Heart right ventricle (tissue), 16 donors: ENCODE measurements at regions of chr12 and their contacts with region 1.

Region 1: DNA sequence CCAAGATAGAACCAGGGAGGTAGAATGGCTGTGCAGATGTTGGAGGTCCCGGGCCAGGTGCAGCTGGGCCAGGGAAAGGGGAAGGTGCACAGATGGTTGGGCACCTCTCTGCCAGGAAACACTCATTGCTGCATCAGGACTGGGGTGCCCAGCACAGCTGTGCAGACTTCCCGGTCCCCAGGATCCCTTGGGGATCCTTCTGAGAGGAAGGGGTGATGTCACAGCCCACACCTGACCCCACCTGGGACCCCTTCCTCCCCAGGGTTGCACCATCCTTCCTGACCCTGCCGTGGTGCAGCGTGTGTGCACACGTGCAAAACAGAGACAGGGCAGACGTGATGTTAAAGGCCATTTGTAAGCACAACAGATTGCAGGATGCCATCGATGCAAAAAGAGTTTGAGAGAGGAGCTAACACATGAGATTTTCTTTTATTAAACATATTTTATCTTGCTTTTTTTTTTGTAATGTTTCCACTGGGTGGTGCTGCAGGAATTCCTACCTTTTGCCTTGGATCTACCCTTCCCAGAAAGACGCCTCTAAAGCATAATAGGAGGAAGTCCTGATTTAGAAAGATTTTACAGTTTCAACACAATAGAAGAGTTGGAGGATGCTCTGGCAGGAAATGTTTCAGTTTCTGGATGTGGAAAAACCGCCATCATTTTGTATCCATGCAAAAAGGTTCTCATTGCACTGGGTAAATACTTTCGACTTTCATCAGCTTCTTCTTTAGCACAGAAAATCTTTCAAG is 14.8 kb downstream of the ELK3 start:
- DNase-seq: no peak
- ATAC-seq: peak; percentile 63 to 82 (median 75)
- H3K4me3 ChIP-seq: peak overlapping the region in 4 of 10 donors; percentile 8 to 21 (median 14)
- H3K27ac ChIP-seq: peak overlapping the region in 9 of 10 donors; percentile 53 to 82 (median 76)
- H3K4me1 ChIP-seq: peaks cover 0 to 100% (median 90%) of the 10 kb centered on the region in 9 donors
- H3K27me3 ChIP-seq: no peaks in the 10 kb centered on the region
- CTCF ChIP-seq: peak in 6 of 9 donors; percentile 8 to 51 (median 34)

Region 2: DNA sequence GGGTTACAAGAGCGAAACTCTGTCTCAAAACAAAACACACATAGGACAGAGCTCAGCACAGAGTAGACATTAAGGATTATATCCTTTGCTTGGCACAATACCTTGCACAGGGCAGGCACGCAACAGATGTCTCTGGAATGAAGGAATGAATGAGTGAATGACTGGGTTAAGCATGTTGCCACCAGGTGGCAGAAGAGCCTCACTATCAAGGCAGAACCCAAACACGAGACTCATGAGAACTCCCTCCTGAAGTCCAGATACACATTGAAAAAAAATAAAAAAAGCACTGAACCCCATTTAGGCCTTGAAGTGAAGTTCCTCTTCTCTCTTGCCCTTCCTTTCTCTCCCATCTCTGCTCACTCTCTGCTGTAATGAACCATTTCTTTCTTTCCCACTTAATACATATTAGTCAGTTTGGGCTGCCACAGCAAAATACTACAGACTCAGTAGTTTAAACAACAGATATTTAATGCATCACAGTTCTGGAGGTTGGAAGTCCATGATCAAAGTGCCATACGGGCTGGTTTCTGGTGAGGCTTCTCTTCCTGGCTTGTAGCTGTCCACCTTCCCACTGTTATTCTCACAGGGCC is 147.0 kb before region 1 on chr12:
- intact Hi-C with region 1: loop called in 7 of 10 experiments (anchors 1 to 5 kb)
- DNase-seq: peak; percentile 37 to 80
- ATAC-seq: peak; percentile 75 to 89 (median 84)
- H3K4me3 ChIP-seq: no peak overlapping the region
- H3K27ac ChIP-seq: peak overlapping the region in 1 of 10 donors; percentile 36
- H3K4me1 ChIP-seq: peaks cover 0 to 32% (median 17%) of the 10 kb centered on the region in 9 donors
- H3K27me3 ChIP-seq: no peaks in the 10 kb centered on the region
- CTCF ChIP-seq: peak; percentile 79 to 91 (median 87)

Region 3: DNA sequence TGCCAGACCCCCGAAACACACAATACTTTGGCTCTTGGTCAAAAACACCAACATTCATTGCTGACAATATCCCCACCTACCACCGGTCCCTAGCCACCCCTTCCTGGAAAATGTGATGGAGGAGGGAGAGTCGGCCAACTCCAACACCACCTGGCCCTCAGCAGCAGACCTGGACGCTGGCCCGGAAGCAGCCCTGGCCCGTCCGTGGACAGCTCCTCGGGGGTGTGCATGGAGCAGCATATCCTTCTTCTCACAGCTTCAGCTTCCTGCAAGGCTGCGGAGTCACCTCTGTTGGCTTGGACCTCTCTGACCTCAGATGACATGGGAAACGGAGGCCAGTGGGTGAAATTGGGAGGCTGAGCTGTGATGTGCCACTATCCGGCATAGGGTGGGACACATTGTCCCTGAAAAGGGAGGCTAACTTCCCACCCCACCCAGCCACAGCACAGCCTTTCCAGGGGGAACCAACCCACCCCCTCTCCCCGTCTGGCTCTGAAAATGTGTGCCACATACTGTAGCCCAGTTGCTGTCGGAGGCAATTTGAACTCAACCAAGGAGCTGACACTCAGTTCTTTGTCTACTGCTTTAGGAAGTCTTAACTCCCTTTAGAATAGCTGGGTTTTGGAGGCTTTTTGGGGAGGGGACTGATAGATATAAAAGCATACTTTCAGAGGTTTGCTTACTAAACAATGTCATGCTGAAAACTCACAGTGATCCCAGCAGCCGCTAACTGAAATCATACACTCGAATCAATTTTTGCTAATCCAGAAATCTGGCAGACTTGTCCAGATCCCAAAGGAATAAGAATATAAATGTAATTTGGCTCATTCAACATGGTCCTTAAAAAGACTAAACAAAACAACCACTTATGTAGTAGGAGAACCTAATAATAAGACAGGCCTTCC is 130.5 kb before region 1 on chr12:
- intact Hi-C with region 1: loop called in 1 of 10 experiments (anchors 5 kb)
- DNase-seq: peak; percentile 70 to 82
- ATAC-seq: peak; percentile 88 to 96 (median 92)
- H3K4me3 ChIP-seq: peak overlapping the region in 1 of 10 donors; percentile 16
- H3K27ac ChIP-seq: peak overlapping the region; percentile 31 to 81 (median 58)
- H3K4me1 ChIP-seq: peaks cover 3 to 49% (median 26%) of the 10 kb centered on the region in 9 donors
- H3K27me3 ChIP-seq: peaks cover 0 to 8% (median 0%) of the 10 kb centered on the region in 7 donors
- CTCF ChIP-seq: no peak

Region 4: DNA sequence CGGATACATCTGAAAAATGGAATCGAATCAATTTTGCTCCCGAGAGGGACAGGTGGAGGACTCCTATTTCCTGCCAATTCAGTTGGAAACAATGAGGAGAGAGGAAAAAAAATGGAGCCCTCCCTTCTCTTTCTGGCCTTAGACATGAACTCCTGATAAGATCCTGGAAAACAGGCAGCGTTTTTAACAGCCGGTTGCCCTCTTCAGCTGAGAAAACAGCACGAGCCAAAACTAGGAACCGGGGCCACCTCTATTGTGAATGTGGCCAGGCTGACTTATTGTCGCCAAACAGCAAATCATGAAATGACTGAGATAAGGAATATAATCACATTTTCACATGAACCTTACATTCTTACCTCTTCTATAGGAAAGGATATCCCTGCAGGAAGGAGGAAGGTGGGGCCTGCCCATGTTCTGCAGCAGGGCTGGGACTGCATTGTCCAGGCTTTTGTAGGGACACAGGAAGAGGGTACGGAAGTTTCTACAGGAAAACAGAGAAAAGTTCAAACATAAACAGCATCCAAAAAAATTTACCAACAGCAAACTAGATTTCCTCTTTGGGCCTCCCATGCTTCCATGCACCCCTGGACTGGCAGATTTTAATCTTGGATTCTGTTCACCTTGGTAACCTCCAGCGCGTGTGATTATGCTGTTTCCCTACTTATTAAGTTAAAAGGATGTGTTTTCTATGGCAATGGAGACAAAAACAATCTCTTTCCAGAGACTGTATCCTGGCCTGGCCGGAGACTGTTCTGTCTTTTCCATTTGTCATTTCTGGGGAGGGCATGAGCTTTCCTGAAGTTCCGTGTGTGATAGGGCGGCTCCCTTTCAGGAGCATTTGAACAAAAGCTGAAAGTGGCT is 43.8 kb before region 1 on chr12:
- intact Hi-C with region 1: loop called in 1 of 10 experiments (anchors 5 kb)
- DNase-seq: peak; percentile 27 to 72
- ATAC-seq: peak; percentile 68 to 91 (median 86)
- H3K4me3 ChIP-seq: no peak overlapping the region
- H3K27ac ChIP-seq: peak overlapping the region; percentile 61 to 92 (median 80)
- H3K4me1 ChIP-seq: peaks cover 2 to 58% (median 24%) of the 10 kb centered on the region in 9 donors
- H3K27me3 ChIP-seq: no peaks in the 10 kb centered on the region
- CTCF ChIP-seq: no peak

Region 5: DNA sequence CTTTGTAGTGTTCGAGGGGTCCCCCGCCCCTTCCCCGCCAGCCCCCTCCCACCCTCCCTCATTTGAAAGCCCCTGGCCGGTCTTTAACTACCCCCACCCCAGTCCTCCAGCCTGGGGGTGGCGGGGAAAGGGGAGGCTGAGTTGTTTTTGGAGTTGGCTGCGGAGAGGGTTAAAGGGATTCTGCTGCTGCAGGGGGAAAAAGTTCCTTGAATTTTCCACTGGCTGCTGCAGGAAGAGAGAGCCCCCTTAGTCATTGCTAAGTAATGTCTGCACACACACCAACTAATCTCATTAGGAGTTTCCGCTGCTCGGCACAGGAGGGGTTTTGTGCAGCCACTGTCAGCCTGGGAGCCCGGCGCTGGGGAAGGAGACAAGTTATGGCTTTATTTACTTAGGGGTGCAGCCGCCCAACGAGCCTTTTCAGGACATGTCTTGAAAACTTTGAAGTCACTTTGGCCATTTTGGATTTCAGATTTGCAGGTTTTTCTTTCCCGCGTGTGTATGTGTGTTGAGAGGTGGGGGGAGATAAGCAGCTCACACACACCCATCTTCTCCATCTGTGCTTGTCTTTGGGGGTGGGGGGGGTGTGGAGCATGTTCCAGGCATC is 13.0 kb before region 1 on chr12:
- intact Hi-C with region 1: loop called in 1 of 10 experiments (anchors 2 kb)
- DNase-seq: peak in 1 of 2 donors; percentile 27
- ATAC-seq: peak in 7 of 8 donors; percentile 37 to 71 (median 52)
- H3K4me3 ChIP-seq: peak overlapping the region; percentile 60 to 93 (median 83)
- H3K27ac ChIP-seq: peak overlapping the region; percentile 37 to 96 (median 88)
- H3K4me1 ChIP-seq: peaks cover 3 to 63% (median 28%) of the 10 kb centered on the region in 9 donors
- H3K27me3 ChIP-seq: no peaks in the 10 kb centered on the region
- CTCF ChIP-seq: no peak

Region 6: GRCh38 chr12:96501139-96501761 is 292.3 kb after region 1 on chr12:
- intact Hi-C with region 1: loop called in 2 of 10 experiments (anchors 10 kb)
- DNase-seq: peak; percentile 36 to 42
- ATAC-seq: peak; percentile 61 to 95 (median 86)
- H3K4me3 ChIP-seq: no peak overlapping the region
- H3K27ac ChIP-seq: peak overlapping the region; percentile 42 to 88 (median 76)
- H3K4me1 ChIP-seq: peaks cover 4 to 36% (median 21%) of the 10 kb centered on the region in 9 donors
- H3K27me3 ChIP-seq: no peaks in the 10 kb centered on the region
- CTCF ChIP-seq: no peak

Region 7: GRCh38 chr12:96516472-96517430 is 307.8 kb after region 1 on chr12:
- intact Hi-C with region 1: loop called in 3 of 10 experiments (anchors 5 to 10 kb)
- DNase-seq: peak; percentile 63 to 73
- ATAC-seq: peak in 6 of 8 donors; percentile 61 to 83 (median 76)
- H3K4me3 ChIP-seq: no peak overlapping the region
- H3K27ac ChIP-seq: peak overlapping the region in 1 of 10 donors; percentile 36
- H3K4me1 ChIP-seq: peaks cover 0 to 7% (median 0%) of the 10 kb centered on the region in 9 donors
- H3K27me3 ChIP-seq: no peaks in the 10 kb centered on the region
- CTCF ChIP-seq: peak; percentile 35 to 77 (median 67)